AG04450 (cell line): ENCODE measurements at regions of chr12 and their contacts with region 1.

Region 1: GRCh38 chr12:95066091-95066855 is 7.1 kb downstream of the NR2C1 start:
- DNase-seq: no peak
- H3K4me3 ChIP-seq: no peak overlapping the region
- H3K27ac ChIP-seq: no peak overlapping the region
- H3K27me3 ChIP-seq: no peaks in the 10 kb centered on the region
- CTCF ChIP-seq: no peak

Region 2: GRCh38 chr12:94207849-94208621 is 858.2 kb before region 1 on chr12:
- CTCF ChIA-PET with region 1: no interaction called
- POLR2A ChIA-PET with region 1: no interaction called
- DNase-seq: no peak
- H3K4me3 ChIP-seq: no peak overlapping the region
- H3K27ac ChIP-seq: no peak overlapping the region
- H3K27me3 ChIP-seq: peaks cover 15% of the 10 kb centered on the region
- CTCF ChIP-seq: no peak

Region 3: DNA sequence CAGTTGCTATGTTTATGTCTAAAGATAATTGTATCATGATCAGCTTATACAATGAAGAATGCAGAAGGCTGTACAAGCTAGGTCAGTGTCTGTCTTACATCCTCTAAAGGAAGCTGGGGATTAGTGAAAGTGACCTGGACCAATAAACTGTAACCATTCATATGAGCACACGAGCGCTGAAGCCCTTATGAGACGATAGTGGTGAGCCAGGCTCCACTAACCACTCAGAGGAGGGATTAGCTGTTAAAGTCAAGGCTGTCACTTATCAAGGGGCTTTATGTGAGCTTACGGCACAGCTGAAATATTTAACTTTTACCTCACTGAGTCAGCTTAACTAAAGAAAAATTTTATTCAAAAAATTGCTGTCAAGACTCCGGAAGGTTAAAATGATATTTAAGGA is 93.1 kb before region 1 on chr12:
- CTCF ChIA-PET with region 1: no interaction called
- POLR2A ChIA-PET with region 1: no interaction called
- DNase-seq: peak; percentile 70
- H3K4me3 ChIP-seq: no peak overlapping the region
- H3K27ac ChIP-seq: no peak overlapping the region
- H3K27me3 ChIP-seq: no peaks in the 10 kb centered on the region
- CTCF ChIP-seq: no peak

Region 4: GRCh38 chr12:95102916-95103671 is 36.8 kb after region 1 on chr12:
- CTCF ChIA-PET with region 1: no interaction called
- POLR2A ChIA-PET with region 1: interaction called, 10 read pairs
- DNase-seq: peak; percentile 71
- H3K4me3 ChIP-seq: no peak overlapping the region
- H3K27ac ChIP-seq: no peak overlapping the region
- H3K27me3 ChIP-seq: no peaks in the 10 kb centered on the region
- CTCF ChIP-seq: no peak

Region 5: GRCh38 chr12:95506707-95507523 is 440.6 kb after region 1 on chr12:
- CTCF ChIA-PET with region 1: no interaction called
- POLR2A ChIA-PET with region 1: no interaction called
- DNase-seq: no peak
- H3K4me3 ChIP-seq: no peak overlapping the region
- H3K27ac ChIP-seq: no peak overlapping the region
- H3K27me3 ChIP-seq: no peaks in the 10 kb centered on the region
- CTCF ChIP-seq: no peak